ENCODE measurements at regions of chr18 and their contacts with region 1.

Region 1: GRCh38 chr18:50009773-50010335 is 185.1 kb downstream of the MYO5B start:
- DNase-seq: peak; percentile 72
- H3K4me3 ChIP-seq: no peak overlapping the region
- H3K27ac ChIP-seq: no peak overlapping the region
- H3K4me1 ChIP-seq: no peaks in the 10 kb centered on the region
- H3K27me3 ChIP-seq: no peaks in the 10 kb centered on the region
- CTCF ChIP-seq: peak; percentile 52

Region 2: DNA sequence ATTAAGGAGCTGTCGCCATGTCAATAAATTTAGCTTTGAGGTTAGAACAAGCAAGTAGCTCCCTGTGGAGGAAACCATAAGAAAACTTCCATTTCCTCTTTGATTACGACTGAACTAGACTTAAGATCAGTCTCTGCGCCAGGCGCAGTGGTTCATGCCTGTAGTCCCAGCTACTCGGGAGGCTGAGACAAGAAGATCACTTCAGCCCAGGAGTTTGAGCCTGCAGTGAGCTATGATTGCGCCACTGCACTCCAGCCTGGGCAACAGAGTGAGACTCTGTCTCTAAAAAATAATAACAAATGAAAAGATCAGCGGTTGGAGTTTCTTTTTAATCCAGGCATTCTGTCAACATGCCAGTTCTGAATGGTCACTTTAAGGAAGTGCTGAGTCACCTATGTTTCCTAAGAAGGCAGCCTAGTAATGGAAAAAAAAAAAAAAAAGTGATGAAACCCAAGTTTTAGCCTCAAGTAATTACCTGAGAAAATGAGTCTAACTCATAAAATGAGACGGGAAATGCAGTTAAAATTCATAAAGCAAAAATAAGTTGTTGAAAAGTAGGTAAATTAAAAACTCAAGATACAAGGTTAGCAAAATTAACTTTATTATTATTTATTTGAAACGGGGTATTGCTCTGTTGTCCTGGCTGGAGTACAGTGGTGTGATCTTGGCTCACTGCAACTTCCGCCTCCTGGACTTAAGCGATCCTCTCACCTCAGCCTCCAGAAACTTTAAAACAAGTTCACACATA is 533.0 kb before region 1 on chr18:
- intact Hi-C with region 1: no loop called
- DNase-seq: no peak
- H3K4me3 ChIP-seq: no peak overlapping the region
- H3K27ac ChIP-seq: no peak overlapping the region
- H3K4me1 ChIP-seq: no peaks in the 10 kb centered on the region
- H3K27me3 ChIP-seq: no peaks in the 10 kb centered on the region
- CTCF ChIP-seq: no peak

Region 3: GRCh38 chr18:50203801-50204604 is 194.1 kb after region 1 on chr18:
- intact Hi-C with region 1: loop called (anchors 5 kb)
- DNase-seq: peak; percentile 72
- H3K4me3 ChIP-seq: no peak overlapping the region
- H3K27ac ChIP-seq: no peak overlapping the region
- H3K4me1 ChIP-seq: no peaks in the 10 kb centered on the region
- H3K27me3 ChIP-seq: no peaks in the 10 kb centered on the region
- CTCF ChIP-seq: peak; percentile 63